PC-9 (cell line): ENCODE measurements at regions of chr3 and their contacts with region 1.

Region 1: DNA sequence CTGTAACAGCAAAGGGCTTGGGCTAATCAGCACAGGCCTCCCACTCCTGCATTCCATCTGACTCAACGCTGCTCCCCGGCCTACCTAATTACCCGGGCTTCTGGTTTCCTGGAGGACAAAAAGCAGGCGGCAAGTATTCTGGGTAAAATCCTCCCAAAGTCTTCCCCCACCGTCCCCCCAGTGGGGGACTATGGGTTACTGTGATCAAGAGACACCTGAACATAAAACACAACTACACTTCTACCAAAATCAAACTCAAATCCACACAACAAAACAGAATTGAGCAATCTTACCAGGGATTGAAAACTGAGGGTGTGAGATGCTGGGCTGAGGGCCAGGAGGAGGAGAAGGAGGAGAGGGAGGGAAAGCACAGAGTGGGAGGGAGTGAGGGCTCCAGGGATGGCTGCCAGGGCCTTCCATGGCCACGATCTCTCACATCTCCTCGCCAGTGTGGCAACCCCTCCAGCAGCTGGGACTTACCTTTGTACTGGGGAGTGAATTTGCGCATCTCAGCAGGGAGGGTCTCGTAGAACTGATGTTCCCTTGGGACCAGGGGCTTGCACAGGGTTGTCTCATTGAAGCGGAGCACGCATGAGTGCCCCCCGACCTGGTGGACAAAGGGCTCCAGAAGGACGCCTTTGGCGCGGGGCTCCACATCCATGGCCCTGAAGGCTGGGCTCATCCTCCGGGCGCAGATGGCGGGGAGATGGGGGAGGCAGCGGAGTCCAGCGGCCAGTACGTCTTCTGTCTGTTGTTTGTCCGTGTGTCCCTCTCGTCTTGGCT is 9.1 kb upstream of the NCKIPSD start:
- DNase-seq: peak; percentile 64 to 66
- H3K4me3 ChIP-seq: no peak overlapping the region
- H3K27ac ChIP-seq: 0 out of 2 replicates have a peak overlapping the region, but pooled peaks have one; percentile 34
- H3K4me1 ChIP-seq: peaks cover 18% of the 10 kb centered on the region
- H3K27me3 ChIP-seq: no peaks in the 10 kb centered on the region
- CTCF ChIP-seq: no peak

Region 2: DNA sequence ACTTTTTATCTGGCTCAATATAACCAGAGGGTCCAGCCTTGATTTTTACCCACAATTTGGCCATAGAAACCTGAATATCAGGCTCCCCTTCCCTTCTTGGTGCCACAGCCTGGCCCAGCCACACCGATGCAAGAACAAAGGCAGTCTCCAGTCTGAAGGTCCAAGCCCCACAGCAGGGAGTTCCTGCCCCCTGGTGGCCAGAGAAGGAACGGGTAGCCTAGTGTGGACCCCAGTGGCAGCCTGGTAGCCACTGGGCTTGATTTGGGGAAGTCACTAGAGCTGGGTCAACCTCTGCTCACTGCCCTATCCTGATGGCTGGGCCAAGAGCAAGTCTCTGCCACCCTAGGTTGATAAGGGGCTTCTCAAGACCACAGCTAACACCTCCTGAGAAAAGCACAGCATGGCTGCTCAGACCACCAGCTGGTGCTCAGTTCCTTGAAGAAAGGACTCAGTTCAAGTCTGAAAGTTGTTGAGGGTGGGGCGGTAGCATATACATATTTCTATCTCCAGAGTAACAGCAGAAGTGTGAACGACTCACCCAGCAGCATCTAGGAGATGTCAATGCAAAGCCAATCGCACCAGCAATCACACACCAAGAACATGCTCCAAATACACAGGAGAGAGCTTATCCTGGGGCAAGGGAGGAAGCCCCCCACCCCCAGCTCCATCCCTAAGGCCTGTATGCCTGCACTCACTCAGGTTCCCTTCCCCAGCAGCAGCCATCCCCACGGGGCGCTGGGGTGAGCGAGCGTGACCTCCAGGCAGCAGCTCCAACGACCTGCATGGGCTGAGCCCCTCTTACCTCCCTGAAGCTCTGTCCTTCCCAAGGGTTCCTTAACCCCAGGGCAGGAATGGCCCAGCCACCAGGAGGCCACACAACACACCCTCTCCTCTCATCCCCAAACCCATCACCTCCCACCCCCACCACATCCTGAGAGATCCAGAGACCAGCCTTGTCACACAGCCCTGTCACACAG is 145.8 kb before region 1 on chr3:
- CTCF ChIA-PET with region 1: no interaction called
- POLR2A ChIA-PET with region 1: no interaction called
- intact Hi-C with region 1: no loop called
- DNase-seq: peak; percentile 56 to 84
- H3K4me3 ChIP-seq: no peak overlapping the region
- H3K27ac ChIP-seq: no peak overlapping the region
- H3K4me1 ChIP-seq: 0 out of 2 replicates have a peak, but pooled peaks cover 3% of the 10 kb centered on the region
- H3K27me3 ChIP-seq: no peaks in the 10 kb centered on the region
- CTCF ChIP-seq: peak; percentile 90

Region 3: GRCh38 chr3:48716982-48717746 is 22.4 kb after region 1 on chr3 and contains the start of gene IP6K2:
- CTCF ChIA-PET with region 1: no interaction called
- POLR2A ChIA-PET with region 1: interaction called, 19 read pairs
- intact Hi-C with region 1: no loop called
- DNase-seq: peak; percentile 92 to 99
- H3K4me3 ChIP-seq: peak within 1 kb of the TSS; percentile 99
- H3K27ac ChIP-seq: peak within 1 kb of the TSS; percentile 53
- H3K4me1 ChIP-seq: peaks cover 17% of the 10 kb centered on the region
- H3K27me3 ChIP-seq: no peaks in the 10 kb centered on the region
- CTCF ChIP-seq: no peak
- total RNA-seq, gene IP6K2: 123 and 144 TPM in 2 replicates